Endothelial cell of umbilical vein (primary cell): ENCODE measurements at regions of chr18 and their contacts with region 1.

Region 1: DNA sequence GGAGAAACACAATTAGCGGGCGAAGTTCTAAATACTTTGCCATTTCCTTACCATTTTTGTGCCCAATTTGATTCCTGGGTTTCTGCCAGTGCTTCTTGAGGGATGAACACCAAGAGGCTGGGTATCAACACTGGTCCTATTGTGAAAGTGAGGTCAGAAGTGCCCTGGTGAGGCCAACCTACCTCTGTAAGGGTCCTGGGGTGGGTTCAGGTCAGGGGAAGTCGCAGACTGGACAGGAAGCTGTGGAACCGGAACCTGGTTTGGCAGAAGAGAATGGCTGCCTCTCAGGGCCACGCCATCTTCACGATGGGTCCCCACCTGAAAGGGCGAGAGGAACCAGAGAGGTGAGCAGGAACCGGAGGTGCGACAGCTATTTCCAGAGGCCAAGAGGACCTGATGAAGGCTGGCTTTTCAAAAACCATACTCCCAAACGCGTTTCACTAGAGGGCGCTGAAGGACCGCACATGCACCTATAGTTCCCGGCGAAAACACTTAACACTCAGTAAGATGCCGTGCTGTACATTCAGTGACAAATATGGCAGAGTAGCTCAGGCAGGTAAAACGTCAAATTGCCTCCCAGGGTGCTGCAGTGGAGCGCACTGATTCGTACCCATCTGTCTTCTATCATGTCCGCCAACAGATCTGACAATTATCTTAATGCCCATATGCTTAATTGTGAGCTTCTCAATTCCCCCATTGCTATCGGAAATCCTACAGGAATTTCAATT is 275.3 kb upstream of the CCDC68 start:
- DNase-seq: peak; percentile 82
- H3K4me3 ChIP-seq: no peak overlapping the region
- H3K27ac ChIP-seq: peak overlapping the region; percentile 61
- H3K4me1 ChIP-seq: peaks cover 22% of the 10 kb centered on the region
- H3K27me3 ChIP-seq: no peaks in the 10 kb centered on the region
- CTCF ChIP-seq: peak; percentile 63 to 69
- POLR2A ChIP-seq: no peak

Region 2: DNA sequence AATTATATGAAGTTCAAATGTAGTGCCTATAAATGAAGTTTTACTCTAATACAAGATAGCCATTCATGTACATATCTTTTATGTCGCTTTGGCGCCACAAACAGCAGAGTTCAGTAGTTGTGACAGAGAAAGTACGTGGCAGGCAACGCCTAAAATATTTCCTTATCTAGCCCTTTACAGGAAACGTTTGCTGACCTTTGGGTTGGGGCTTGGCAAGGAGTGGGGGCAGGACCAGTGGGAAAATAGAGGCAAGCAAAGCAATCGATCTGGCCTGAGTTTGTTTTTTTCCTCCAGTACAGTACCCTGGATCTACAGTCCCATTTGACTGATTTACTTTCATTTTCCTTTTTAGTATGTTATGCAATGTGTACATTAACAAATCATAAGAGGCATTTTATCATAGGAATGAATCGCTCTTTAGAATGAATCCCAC is 288.4 kb before region 1 on chr18:
- CTCF ChIA-PET with region 1: no interaction called
- POLR2A ChIA-PET with region 1: no interaction called
- dilution Hi-C with region 1: no loop called
- intact Hi-C with region 1: no loop called
- DNase-seq: peak; percentile 76
- H3K4me3 ChIP-seq: peak overlapping the region; percentile 1 to 54 (median 51)
- H3K27ac ChIP-seq: peak overlapping the region; percentile 14
- H3K4me1 ChIP-seq: peaks cover 15% of the 10 kb centered on the region
- H3K27me3 ChIP-seq: no peaks in the 10 kb centered on the region
- CTCF ChIP-seq: no peak
- POLR2A ChIP-seq: no peak

Region 3: GRCh38 chr18:55251254-55251971 is 16.9 kb after region 1 on chr18:
- CTCF ChIA-PET with region 1: interaction called, 54 read pairs
- POLR2A ChIA-PET with region 1: no interaction called
- dilution Hi-C with region 1: no loop called
- intact Hi-C with region 1: no loop called
- DNase-seq: peak; percentile 86
- H3K4me3 ChIP-seq: peak overlapping the region in 1 of 3 experiments; percentile 32
- H3K27ac ChIP-seq: peak overlapping the region; percentile 62
- H3K4me1 ChIP-seq: peaks cover 44% of the 10 kb centered on the region
- H3K27me3 ChIP-seq: no peaks in the 10 kb centered on the region
- CTCF ChIP-seq: no peak
- POLR2A ChIP-seq: no peak

Region 4: GRCh38 chr18:55275039-55275901 is 40.7 kb after region 1 on chr18:
- CTCF ChIA-PET with region 1: interaction called, 14 read pairs
- POLR2A ChIA-PET with region 1: no interaction called
- dilution Hi-C with region 1: no loop called
- intact Hi-C with region 1: loop called (anchors 1 kb)
- DNase-seq: peak; percentile 28
- H3K4me3 ChIP-seq: no peak overlapping the region
- H3K27ac ChIP-seq: no peak overlapping the region
- H3K4me1 ChIP-seq: peaks cover 13% of the 10 kb centered on the region
- H3K27me3 ChIP-seq: no peaks in the 10 kb centered on the region
- CTCF ChIP-seq: no peak
- POLR2A ChIP-seq: no peak

Region 5: DNA sequence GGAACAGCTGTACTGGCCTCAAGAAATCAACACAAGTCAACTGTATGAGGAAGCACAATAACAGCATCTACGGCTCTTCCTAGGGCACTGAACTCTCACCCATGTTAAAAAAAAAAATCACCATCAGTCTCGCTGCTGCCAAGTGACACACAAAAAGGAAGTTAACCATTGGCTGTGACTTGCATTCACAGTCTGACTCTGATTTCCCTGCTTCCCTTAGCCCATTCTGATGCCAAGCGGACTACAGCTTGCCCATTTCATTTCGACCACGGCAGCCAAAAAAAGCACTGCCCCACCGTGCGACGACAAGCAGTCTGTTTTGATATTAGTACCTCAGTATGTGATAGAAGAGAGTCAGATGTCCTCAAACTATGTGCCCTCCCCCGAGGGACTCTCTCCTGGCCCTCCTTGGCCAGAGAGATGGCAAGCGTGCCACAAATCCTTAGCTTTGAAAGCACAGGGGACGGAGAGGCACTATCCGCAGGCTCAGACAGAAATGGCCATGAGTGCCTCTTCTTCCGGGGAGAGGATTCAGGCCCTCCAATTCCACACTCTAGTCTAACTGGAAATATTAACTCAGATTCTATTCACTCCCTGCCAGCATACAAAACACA is 103.5 kb after region 1 on chr18:
- CTCF ChIA-PET with region 1: interaction called, 22 read pairs
- POLR2A ChIA-PET with region 1: no interaction called
- dilution Hi-C with region 1: no loop called
- intact Hi-C with region 1: loop called (anchors 1 kb)
- DNase-seq: peak; percentile 92
- H3K4me3 ChIP-seq: no peak overlapping the region
- H3K27ac ChIP-seq: peak overlapping the region; percentile 83
- H3K4me1 ChIP-seq: peaks cover 45% of the 10 kb centered on the region
- H3K27me3 ChIP-seq: no peaks in the 10 kb centered on the region
- CTCF ChIP-seq: no peak
- POLR2A ChIP-seq: no peak

Region 6: DNA sequence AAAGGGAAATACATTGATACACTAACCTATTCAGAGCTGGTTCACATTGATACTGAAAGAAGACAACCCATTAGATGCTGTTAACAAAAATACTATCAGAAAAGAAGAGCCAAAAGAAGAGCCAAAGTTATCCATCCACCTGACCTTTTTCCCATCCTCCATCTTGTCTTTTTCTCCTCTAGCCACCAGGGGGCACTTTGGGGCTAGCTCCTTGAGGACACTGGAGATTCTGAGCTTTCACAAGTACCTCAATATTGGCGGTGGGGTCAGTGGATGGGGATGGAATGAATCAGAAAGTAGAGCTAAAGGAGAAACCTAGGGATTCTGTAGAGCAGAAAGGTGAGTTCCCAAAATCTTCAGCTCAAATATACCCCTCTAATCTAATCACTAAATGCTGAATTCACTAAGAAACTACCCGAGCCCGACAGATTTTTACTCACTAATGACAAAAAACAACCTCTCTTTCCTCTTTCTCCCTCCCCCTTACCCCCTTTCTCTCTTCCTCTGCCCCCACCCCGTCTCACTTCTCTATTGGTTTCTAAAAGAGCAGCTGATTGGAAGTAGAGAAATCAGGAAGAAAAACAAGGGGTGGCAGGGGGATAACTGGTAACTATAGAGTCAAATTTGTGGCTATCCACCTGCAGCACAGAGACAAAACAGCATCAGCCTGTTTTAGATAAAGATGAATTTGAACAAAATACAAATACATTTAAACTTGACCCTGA is 150.2 kb after region 1 on chr18:
- CTCF ChIA-PET with region 1: interaction called, 14 read pairs
- POLR2A ChIA-PET with region 1: no interaction called
- dilution Hi-C with region 1: no loop called
- intact Hi-C with region 1: loop called (anchors 5 kb)
- DNase-seq: peak; percentile 67
- H3K4me3 ChIP-seq: no peak overlapping the region
- H3K27ac ChIP-seq: no peak overlapping the region
- H3K4me1 ChIP-seq: peaks cover 39% of the 10 kb centered on the region
- H3K27me3 ChIP-seq: no peaks in the 10 kb centered on the region
- CTCF ChIP-seq: peak; percentile 69 to 74
- POLR2A ChIP-seq: no peak

Region 7: GRCh38 chr18:55405893-55406406 is 171.4 kb after region 1 on chr18:
- CTCF ChIA-PET with region 1: interaction called, 18 read pairs
- POLR2A ChIA-PET with region 1: no interaction called
- dilution Hi-C with region 1: no loop called
- intact Hi-C with region 1: loop called (anchors 2 kb)
- DNase-seq: peak; percentile 97
- H3K4me3 ChIP-seq: no peak overlapping the region
- H3K27ac ChIP-seq: peak overlapping the region; percentile 73
- H3K4me1 ChIP-seq: peaks cover 48% of the 10 kb centered on the region
- H3K27me3 ChIP-seq: no peaks in the 10 kb centered on the region
- CTCF ChIP-seq: peak in 1 of 2 donors; percentile 20
- POLR2A ChIP-seq: no peak

Region 8: GRCh38 chr18:55861266-55861665 is 626.7 kb after region 1 on chr18:
- CTCF ChIA-PET with region 1: interaction called, 17 read pairs
- POLR2A ChIA-PET with region 1: no interaction called
- dilution Hi-C with region 1: no loop called
- intact Hi-C with region 1: loop called (anchors 10 kb)
- DNase-seq: peak; percentile 65
- H3K4me3 ChIP-seq: no peak overlapping the region
- H3K27ac ChIP-seq: no peak overlapping the region
- H3K4me1 ChIP-seq: peaks cover 5% of the 10 kb centered on the region
- H3K27me3 ChIP-seq: no peaks in the 10 kb centered on the region
- CTCF ChIP-seq: peak; percentile 41 to 44
- POLR2A ChIP-seq: no peak